ENCODE measurements at regions of chr11 and their contacts with region 1.

Region 1: GRCh38 chr11:12963792-12964536 is 45.2 kb upstream of the RASSF10 start:
- DNase-seq: peak; percentile 73
- H3K4me3 Mint-ChIP-seq: no peak overlapping the region
- H3K27ac Mint-ChIP-seq: no peak overlapping the region
- H3K4me1 Mint-ChIP-seq: no peaks in the 10 kb centered on the region
- H3K27me3 Mint-ChIP-seq: peaks cover 20% of the 10 kb centered on the region

Region 2: GRCh38 chr11:12979928-12980689 is 16.1 kb after region 1 on chr11:
- CTCF ChIA-PET with region 1: interaction called, 11 read pairs
- POLR2A ChIA-PET with region 1: no interaction called
- intact Hi-C with region 1: no loop called
- DNase-seq: no peak
- H3K4me3 Mint-ChIP-seq: no peak overlapping the region
- H3K27ac Mint-ChIP-seq: no peak overlapping the region
- H3K4me1 Mint-ChIP-seq: no peaks in the 10 kb centered on the region
- H3K27me3 Mint-ChIP-seq: peaks cover 7% of the 10 kb centered on the region

Region 3: GRCh38 chr11:13183094-13183825 is 219.3 kb after region 1 on chr11:
- CTCF ChIA-PET with region 1: interaction called, 14 read pairs
- POLR2A ChIA-PET with region 1: no interaction called
- intact Hi-C with region 1: loop called (anchors 1 kb)
- DNase-seq: no peak
- H3K4me3 Mint-ChIP-seq: no peak overlapping the region
- H3K27ac Mint-ChIP-seq: no peak overlapping the region
- H3K4me1 Mint-ChIP-seq: peaks cover 7% of the 10 kb centered on the region
- H3K27me3 Mint-ChIP-seq: peaks cover 15% of the 10 kb centered on the region

Region 4: DNA sequence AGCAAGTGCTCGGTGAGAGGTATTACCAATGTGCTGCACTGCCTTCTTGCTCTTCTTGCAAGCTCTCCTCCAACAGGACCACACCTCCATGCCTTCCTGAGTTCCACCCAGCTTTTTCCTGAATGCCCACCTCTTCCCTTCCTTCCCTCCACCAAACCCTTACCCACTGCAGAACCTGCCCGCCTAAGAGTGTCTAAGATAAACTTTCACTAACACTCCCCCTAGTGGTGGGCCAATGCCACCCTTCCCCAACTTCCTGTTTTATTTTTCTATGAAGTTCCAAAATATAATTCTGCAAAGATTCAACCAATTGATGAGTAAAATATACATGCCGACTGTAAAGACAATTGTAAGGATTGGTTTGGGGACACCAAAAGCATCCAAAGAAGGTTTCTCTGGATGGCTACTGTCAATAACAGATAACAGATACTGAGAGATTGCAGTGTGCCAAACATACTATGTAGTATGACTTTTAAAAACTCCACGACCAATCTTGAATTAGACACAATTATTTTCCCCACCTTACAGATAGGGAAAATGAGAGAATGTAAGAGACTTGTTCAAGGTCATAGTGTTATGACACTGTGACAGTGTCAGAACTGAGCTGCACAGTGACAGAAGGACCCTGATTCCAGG is 275.0 kb after region 1 on chr11:
- CTCF ChIA-PET with region 1: interaction called, 12 read pairs
- POLR2A ChIA-PET with region 1: no interaction called
- intact Hi-C with region 1: loop called (anchors 2 kb)
- DNase-seq: peak; percentile 55
- H3K4me3 Mint-ChIP-seq: no peak overlapping the region
- H3K27ac Mint-ChIP-seq: no peak overlapping the region
- H3K4me1 Mint-ChIP-seq: no peaks in the 10 kb centered on the region
- H3K27me3 Mint-ChIP-seq: peaks cover 14% of the 10 kb centered on the region

Region 5: DNA sequence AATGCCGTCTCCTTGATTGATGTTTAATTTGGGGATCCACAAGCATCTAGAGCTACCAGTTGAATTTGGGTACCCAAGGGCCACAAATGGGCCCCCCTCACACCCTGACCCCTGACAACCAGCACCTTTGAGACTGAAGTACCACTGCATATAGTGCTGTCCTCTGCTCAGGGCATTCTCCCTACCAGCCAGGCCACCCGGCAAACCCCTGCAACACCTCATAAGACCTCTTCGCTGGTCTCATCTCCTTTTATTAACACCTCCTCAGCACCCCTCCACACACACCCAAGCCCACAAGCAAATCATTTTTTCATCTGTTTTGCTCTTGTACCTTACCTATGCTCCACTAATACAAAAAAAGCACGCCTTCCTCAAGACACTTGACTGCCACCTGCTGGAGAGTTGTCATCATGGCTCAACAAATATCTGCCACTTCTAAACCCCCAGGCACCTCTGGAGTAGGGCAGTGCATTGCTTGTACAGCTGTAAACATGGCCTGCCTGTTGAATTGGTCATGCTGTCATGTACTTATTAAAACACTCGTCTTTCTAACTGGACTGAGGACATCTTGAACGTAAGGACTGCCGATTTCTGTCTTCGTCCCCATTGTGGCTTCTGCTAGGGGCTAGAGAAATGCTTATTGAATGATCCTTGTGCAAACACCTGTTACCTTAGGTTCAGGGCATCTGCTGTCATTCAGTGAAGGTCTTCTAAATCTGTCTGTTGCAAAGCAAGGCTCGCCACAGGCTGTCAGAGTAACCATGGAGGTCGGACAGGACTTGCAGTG is 380.2 kb after region 1 on chr11:
- CTCF ChIA-PET with region 1: interaction called, 23 read pairs
- POLR2A ChIA-PET with region 1: no interaction called
- intact Hi-C with region 1: loop called (anchors 2 kb)
- DNase-seq: peak; percentile 80
- H3K4me3 Mint-ChIP-seq: no peak overlapping the region
- H3K27ac Mint-ChIP-seq: no peak overlapping the region
- H3K4me1 Mint-ChIP-seq: peaks cover 43% of the 10 kb centered on the region
- H3K27me3 Mint-ChIP-seq: no peaks in the 10 kb centered on the region

Region 6: GRCh38 chr11:13462901-13463778 is 499.2 kb after region 1 on chr11 and contains the start of gene BTBD10:
- CTCF ChIA-PET with region 1: interaction called, 3 read pairs
- POLR2A ChIA-PET with region 1: no interaction called
- intact Hi-C with region 1: loop called (anchors 2 kb)
- DNase-seq: peak; percentile 95
- H3K4me3 Mint-ChIP-seq: peak within 1 kb of the TSS; percentile 98
- H3K27ac Mint-ChIP-seq: peak within 1 kb of the TSS; percentile 95
- H3K4me1 Mint-ChIP-seq: peaks cover 35% of the 10 kb centered on the region
- H3K27me3 Mint-ChIP-seq: no peaks in the 10 kb centered on the region
- total RNA-seq, gene BTBD10: 22.3 to 24.3 TPM